MCF 10A (cell line): ENCODE measurements at regions of chr12 and their contacts with region 1.

Region 1: DNA sequence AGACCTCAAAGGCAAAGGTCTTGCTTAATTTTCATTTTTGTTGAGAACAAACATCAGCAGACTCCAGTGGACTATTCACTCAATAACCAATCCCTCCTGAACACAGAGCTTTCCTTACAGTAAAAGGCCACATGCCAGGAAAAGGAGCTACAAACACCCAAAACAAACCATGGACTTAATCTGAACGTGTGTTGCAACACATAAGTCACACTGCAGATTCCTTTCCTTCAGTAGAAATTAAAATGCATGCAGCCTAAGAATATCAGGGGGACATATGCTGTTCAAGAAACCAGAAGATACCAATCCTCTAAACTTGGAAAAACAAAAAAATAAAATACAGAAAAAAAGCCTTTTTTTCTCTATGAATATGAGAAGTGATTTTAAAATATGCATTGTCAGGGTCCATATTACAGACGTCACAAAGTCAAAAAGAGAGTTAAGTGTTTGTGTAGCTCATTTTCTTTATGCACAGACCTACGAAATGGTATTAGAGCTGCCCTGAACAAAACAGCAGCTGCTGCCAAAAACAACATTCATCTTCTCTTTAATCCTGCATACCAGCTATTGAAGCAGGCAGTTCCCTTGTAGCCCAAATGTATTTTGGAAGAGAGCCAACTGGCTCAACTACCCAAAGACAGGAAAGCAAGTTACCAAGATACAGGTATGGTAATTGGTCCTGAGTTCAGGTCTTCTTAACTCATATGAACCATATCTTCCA is 26.2 kb downstream of the KITLG start:
- DNase-seq: peak; percentile 94
- H3K4me3 Mint-ChIP-seq: peak overlapping the region; percentile 34
- H3K27ac Mint-ChIP-seq: peak overlapping the region; percentile 78
- H3K4me1 Mint-ChIP-seq: peaks cover 35% of the 10 kb centered on the region
- H3K27me3 Mint-ChIP-seq: no peaks in the 10 kb centered on the region
- CTCF ChIP-seq: no peak

Region 2: GRCh38 chr12:88570103-88570502 is 16.0 kb after region 1 on chr12:
- CTCF ChIA-PET with region 1: interaction called, 4 read pairs
- POLR2A ChIA-PET with region 1: interaction called, 17 read pairs
- intact Hi-C with region 1: no loop called
- DNase-seq: peak; percentile 24
- H3K4me3 Mint-ChIP-seq: no peak overlapping the region
- H3K27ac Mint-ChIP-seq: no peak overlapping the region
- H3K4me1 Mint-ChIP-seq: peaks cover 37% of the 10 kb centered on the region
- H3K27me3 Mint-ChIP-seq: no peaks in the 10 kb centered on the region
- CTCF ChIP-seq: no peak